ENCODE measurements at regions of chr5 and their contacts with region 1.

Region 1: GRCh38 chr5:56814963-56815658 is at the start of gene MAP3K1:
- DNase-seq: peak; percentile 70 to 76 (median 74)
- H3K4me3 ChIP-seq: peak within 1 kb of the TSS; percentile 67 to 97 (median 87)
- H3K4me3 Mint-ChIP-seq: peak within 1 kb of the TSS; percentile 88 to 97
- H3K27ac ChIP-seq: peak within 1 kb of the TSS; percentile 79 to 89
- H3K27ac Mint-ChIP-seq: peak within 1 kb of the TSS; percentile 91 to 98 (median 94)
- H3K4me1 ChIP-seq: peaks cover 38 to 53% of the 10 kb centered on the region in 2 donors
- H3K4me1 Mint-ChIP-seq: peaks cover 41% of the 10 kb centered on the region
- H3K27me3 ChIP-seq: no peaks in the 10 kb centered on the region
- H3K27me3 Mint-ChIP-seq: no peaks in the 10 kb centered on the region
- CTCF ChIP-seq: peak; percentile 19
- polyA plus RNA-seq, gene MAP3K1: 44.7 to 62.1 (median 45.6) TPM

Region 2: GRCh38 chr5:56686337-56687195 is 128.5 kb before region 1 on chr5:
- intact Hi-C with region 1: loop called (anchors 5 to 10 kb)
- DNase-seq: peak; percentile 34 to 50 (median 42)
- H3K4me3 ChIP-seq: peak overlapping the region in 1 of 3 experiments; percentile 58
- H3K4me3 Mint-ChIP-seq: no peak overlapping the region
- H3K27ac ChIP-seq: peak overlapping the region; percentile 59 to 91
- H3K27ac Mint-ChIP-seq: peak overlapping the region; percentile 90 to 97 (median 93)
- H3K4me1 ChIP-seq: peaks cover 42 to 53% of the 10 kb centered on the region in 2 donors
- H3K4me1 Mint-ChIP-seq: peaks cover 57% of the 10 kb centered on the region
- H3K27me3 ChIP-seq: no peaks in the 10 kb centered on the region
- H3K27me3 Mint-ChIP-seq: peaks cover 0 to 3% (median 0%) of the 10 kb centered on the region in 3 donors
- CTCF ChIP-seq: no peak

Region 3: GRCh38 chr5:56737002-56737621 is 78.0 kb before region 1 on chr5:
- intact Hi-C with region 1: loop called (anchors 2 to 5 kb)
- DNase-seq: peak; percentile 49 to 77 (median 70)
- H3K4me3 ChIP-seq: peak overlapping the region in 1 of 3 experiments; percentile 48
- H3K4me3 Mint-ChIP-seq: peak overlapping the region; percentile 39 to 72
- H3K27ac ChIP-seq: peak overlapping the region; percentile 63 to 82
- H3K27ac Mint-ChIP-seq: peak overlapping the region; percentile 88 to 99 (median 92)
- H3K4me1 ChIP-seq: peaks cover 49 to 54% of the 10 kb centered on the region in 2 donors
- H3K4me1 Mint-ChIP-seq: peaks cover 66% of the 10 kb centered on the region
- H3K27me3 ChIP-seq: no peaks in the 10 kb centered on the region
- H3K27me3 Mint-ChIP-seq: peaks cover 0 to 6% (median 2%) of the 10 kb centered on the region in 3 donors
- CTCF ChIP-seq: no peak